Mucosa of descending colon (tissue), 3 donors: ENCODE measurements at regions of chr6 and their contacts with region 1.

Region 1: GRCh38 chr6:106560996-106561685 is 68.2 kb downstream of the RTN4IP1 start:
- DNase-seq: no peak
- ATAC-seq: no peak
- H3K4me3 ChIP-seq: no peak overlapping the region
- H3K4me1 ChIP-seq: no peaks in the 10 kb centered on the region
- CTCF ChIP-seq: no peak

Region 2: GRCh38 chr6:106339334-106340029 is 221.7 kb before region 1 on chr6:
- intact Hi-C with region 1: loop called in 1 of 2 experiments (anchors 10 kb)
- DNase-seq: peak in 1 of 3 donors; percentile 76
- ATAC-seq: peak; percentile 95
- H3K4me3 ChIP-seq: no peak overlapping the region
- H3K4me1 ChIP-seq: peaks cover 2% of the 10 kb centered on the region
- CTCF ChIP-seq: peak; percentile 66

Region 3: GRCh38 chr6:106360410-106360988 is 200.6 kb before region 1 on chr6 and contains the start of gene CRYBG1:
- intact Hi-C with region 1: no loop called
- DNase-seq: peak; percentile 84 to 94 (median 87)
- ATAC-seq: peak; percentile 99
- H3K4me3 ChIP-seq: peak within 1 kb of the TSS; percentile 12
- H3K4me1 ChIP-seq: peaks cover 9% of the 10 kb centered on the region
- CTCF ChIP-seq: peak; percentile 89
- total RNA-seq, gene CRYBG1: 26.6 to 93.0 (median 86.4) TPM